Caco-2 (cell line): ENCODE measurements at regions of chr5 and their contacts with region 1.

Region 1: GRCh38 chr5:153964880-153965645 is 73.6 kb downstream of the FAM114A2 start:
- DNase-seq: peak; percentile 56 to 69
- H3K4me3 ChIP-seq: no peak overlapping the region
- H3K4me3 Mint-ChIP-seq: peak overlapping the region; percentile 22
- H3K27ac Mint-ChIP-seq: no peak overlapping the region
- H3K4me1 ChIP-seq: 0 out of 2 replicates have a peak, but pooled peaks cover under 1% of the 10 kb centered on the region
- H3K4me1 Mint-ChIP-seq: peaks cover 10% of the 10 kb centered on the region
- H3K27me3 ChIP-seq: no peaks in the 10 kb centered on the region
- H3K27me3 Mint-ChIP-seq: peaks cover 5% of the 10 kb centered on the region
- CTCF ChIP-seq: peak; percentile 91 to 95

Region 2: DNA sequence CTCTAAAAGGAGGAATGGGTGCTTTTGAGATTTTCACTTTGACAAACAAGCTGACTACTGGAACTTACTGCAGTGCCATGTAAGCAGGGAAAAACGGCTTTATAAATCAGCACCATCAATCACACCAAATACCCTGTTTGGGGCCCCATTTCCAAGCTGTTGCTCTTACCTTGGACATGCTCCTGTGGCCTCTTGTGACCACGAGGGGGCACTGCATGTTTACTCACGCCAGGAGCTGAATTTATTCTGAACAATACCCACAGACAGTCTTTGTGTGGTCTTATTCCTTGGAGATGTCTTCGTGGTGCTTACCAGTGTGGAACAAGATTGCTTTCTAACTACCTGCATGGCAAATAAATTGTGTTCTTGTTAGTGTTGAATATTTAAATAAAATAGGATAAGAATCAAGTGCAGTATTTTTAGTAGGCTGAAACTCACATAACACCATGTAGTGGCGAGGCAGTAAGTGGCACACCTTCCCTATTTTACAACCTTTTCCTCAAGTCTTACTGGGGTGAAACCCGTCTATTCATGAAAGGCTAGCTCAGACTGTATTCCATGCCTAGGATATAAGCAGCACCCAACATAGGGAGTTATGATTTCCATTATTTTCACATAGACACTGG is 1404.4 kb before region 1 on chr5:
- CTCF ChIA-PET with region 1: interaction called, 7 read pairs
- POLR2A ChIA-PET with region 1: no interaction called
- intact Hi-C with region 1: loop called (anchors 1 kb)
- DNase-seq: peak; percentile 60 to 62
- H3K4me3 ChIP-seq: no peak overlapping the region
- H3K4me3 Mint-ChIP-seq: no peak overlapping the region
- H3K27ac Mint-ChIP-seq: no peak overlapping the region
- H3K4me1 ChIP-seq: no peaks in the 10 kb centered on the region
- H3K4me1 Mint-ChIP-seq: no peaks in the 10 kb centered on the region
- H3K27me3 ChIP-seq: no peaks in the 10 kb centered on the region
- H3K27me3 Mint-ChIP-seq: no peaks in the 10 kb centered on the region
- CTCF ChIP-seq: peak; percentile 68 to 71

Region 3: DNA sequence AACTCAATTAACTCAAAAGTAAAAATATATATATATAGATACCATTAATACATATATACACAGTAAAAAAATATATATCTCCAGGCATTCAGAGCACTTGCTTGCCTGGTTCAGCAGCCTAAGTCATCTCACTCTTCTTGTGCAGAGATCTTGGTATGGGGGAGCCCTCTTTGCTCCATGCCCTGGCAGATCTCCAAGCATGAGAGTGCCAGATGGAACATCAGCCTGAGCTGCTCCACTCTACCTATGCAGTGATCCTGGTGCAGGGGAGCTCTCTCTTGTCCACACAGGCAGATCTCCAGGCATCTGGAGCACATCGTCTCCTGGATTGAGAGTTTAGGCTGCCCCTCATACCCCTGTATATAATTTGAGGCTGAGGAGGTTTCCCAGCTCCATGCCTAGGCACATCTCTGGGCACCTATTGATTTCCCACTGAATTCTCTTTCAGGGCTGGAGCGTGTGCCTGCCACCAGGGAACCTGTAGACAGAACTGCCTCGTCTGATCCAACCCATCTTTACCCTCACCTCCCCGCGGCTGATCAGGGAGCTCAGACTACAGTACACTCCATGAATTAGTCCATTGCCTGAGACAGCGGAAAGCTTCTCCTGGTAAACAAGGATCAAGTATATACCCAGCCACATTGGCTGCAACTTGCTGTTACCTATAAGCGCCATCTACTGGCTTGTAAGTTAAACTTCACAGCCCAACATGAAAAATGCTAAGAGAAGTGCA is 817.0 kb before region 1 on chr5:
- CTCF ChIA-PET with region 1: no interaction called
- POLR2A ChIA-PET with region 1: no interaction called
- intact Hi-C with region 1: loop called (anchors 1 kb)
- DNase-seq: peak; percentile 38 to 45
- H3K4me3 ChIP-seq: no peak overlapping the region
- H3K4me3 Mint-ChIP-seq: no peak overlapping the region
- H3K27ac Mint-ChIP-seq: no peak overlapping the region
- H3K4me1 ChIP-seq: no peaks in the 10 kb centered on the region
- H3K4me1 Mint-ChIP-seq: no peaks in the 10 kb centered on the region
- H3K27me3 ChIP-seq: no peaks in the 10 kb centered on the region
- H3K27me3 Mint-ChIP-seq: peaks cover 3% of the 10 kb centered on the region
- CTCF ChIP-seq: peak; percentile 48 to 59

Region 4: GRCh38 chr5:153711755-153712154 is 253.3 kb before region 1 on chr5:
- CTCF ChIA-PET with region 1: no interaction called
- POLR2A ChIA-PET with region 1: no interaction called
- intact Hi-C with region 1: loop called (anchors 10 kb)
- DNase-seq: no peak
- H3K4me3 ChIP-seq: no peak overlapping the region
- H3K4me3 Mint-ChIP-seq: no peak overlapping the region
- H3K27ac Mint-ChIP-seq: no peak overlapping the region
- H3K4me1 ChIP-seq: no peaks in the 10 kb centered on the region
- H3K4me1 Mint-ChIP-seq: no peaks in the 10 kb centered on the region
- H3K27me3 ChIP-seq: no peaks in the 10 kb centered on the region
- H3K27me3 Mint-ChIP-seq: peaks cover 7% of the 10 kb centered on the region
- CTCF ChIP-seq: no peak

Region 5: DNA sequence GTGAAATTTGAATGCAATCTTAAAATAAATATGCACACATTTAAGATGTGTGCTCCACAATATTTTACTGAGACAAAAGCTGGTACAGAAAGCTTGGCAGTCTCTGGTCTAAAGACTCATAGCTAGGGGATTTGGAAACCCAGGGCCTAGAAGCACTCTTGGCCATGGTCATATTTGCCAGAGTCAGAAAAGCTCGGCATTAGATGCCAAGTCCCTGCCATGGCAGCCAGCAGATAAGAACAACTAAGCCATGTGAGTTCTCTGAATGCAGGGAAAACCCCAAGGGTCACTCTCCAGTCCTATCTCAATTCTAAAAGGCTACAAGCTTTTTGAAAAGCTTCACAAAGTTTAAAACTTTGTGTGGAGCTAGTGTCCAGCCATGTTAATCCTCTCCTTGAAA is 45.9 kb before region 1 on chr5:
- CTCF ChIA-PET with region 1: no interaction called
- POLR2A ChIA-PET with region 1: no interaction called
- intact Hi-C with region 1: loop called (anchors 2 kb)
- DNase-seq: no peak
- H3K4me3 ChIP-seq: no peak overlapping the region
- H3K4me3 Mint-ChIP-seq: no peak overlapping the region
- H3K27ac Mint-ChIP-seq: no peak overlapping the region
- H3K4me1 ChIP-seq: no peaks in the 10 kb centered on the region
- H3K4me1 Mint-ChIP-seq: no peaks in the 10 kb centered on the region
- H3K27me3 ChIP-seq: no peaks in the 10 kb centered on the region
- H3K27me3 Mint-ChIP-seq: peaks cover 12% of the 10 kb centered on the region
- CTCF ChIP-seq: no peak

Region 6: DNA sequence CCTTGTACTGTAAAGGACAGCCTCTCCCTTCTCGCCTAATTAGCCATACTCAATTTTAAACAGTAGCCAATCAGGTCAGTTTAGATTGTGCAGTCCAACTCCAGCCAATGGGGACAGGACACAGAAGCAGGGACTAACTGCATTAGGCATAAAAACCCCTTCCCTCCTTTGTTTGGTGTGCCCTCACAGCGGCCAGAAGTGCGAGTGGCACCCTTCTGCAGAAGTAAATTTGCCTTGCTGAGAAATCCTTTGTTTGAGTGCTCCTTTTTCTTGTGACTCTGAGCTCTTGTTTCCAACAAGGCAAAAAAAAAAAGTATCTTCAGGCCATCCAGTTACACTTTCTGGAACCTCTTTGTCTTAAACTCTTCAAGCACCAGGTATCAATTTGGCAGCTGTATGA is 23.8 kb before region 1 on chr5:
- CTCF ChIA-PET with region 1: no interaction called
- POLR2A ChIA-PET with region 1: no interaction called
- intact Hi-C with region 1: no loop called
- DNase-seq: no peak
- H3K4me3 ChIP-seq: no peak overlapping the region
- H3K4me3 Mint-ChIP-seq: no peak overlapping the region
- H3K27ac Mint-ChIP-seq: no peak overlapping the region
- H3K4me1 ChIP-seq: no peaks in the 10 kb centered on the region
- H3K4me1 Mint-ChIP-seq: no peaks in the 10 kb centered on the region
- H3K27me3 ChIP-seq: no peaks in the 10 kb centered on the region
- H3K27me3 Mint-ChIP-seq: no peaks in the 10 kb centered on the region
- CTCF ChIP-seq: no peak

Region 7: DNA sequence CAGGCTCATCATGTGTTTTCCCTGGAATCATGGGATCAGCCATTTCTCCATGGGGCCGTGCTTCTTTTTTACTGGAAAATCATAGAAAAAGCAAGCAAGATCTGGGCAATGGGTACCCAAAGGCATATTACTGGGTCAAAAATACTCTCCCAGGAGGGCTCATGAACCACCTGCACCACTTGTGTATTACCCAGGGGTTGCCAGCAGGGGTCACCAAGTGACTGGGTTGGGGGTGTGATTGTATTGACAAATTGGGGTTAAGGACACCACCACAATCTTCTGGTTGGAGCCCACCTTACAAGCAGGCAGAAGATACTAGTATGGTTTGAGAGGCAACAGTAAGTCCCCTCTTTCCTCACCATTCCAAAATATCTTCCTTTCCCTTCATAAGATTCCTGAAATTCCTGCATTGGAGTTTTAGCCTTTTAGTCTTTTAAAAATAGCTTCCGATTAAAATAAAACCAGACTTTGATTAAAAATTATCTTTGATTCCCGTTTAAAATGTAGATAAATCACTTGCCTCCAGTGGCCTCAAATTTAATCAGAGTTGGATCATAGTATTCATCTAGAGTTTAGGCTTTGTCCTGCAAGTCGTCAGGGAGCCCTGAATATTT is 1651.8 kb after region 1 on chr5:
- CTCF ChIA-PET with region 1: no interaction called
- POLR2A ChIA-PET with region 1: no interaction called
- intact Hi-C with region 1: no loop called
- DNase-seq: peak; percentile 58 to 75
- H3K4me3 ChIP-seq: no peak overlapping the region
- H3K4me3 Mint-ChIP-seq: no peak overlapping the region
- H3K27ac Mint-ChIP-seq: no peak overlapping the region
- H3K4me1 ChIP-seq: no peaks in the 10 kb centered on the region
- H3K4me1 Mint-ChIP-seq: no peaks in the 10 kb centered on the region
- H3K27me3 ChIP-seq: no peaks in the 10 kb centered on the region
- H3K27me3 Mint-ChIP-seq: peaks cover 13% of the 10 kb centered on the region
- CTCF ChIP-seq: peak; percentile 86 to 91